Uterus (tissue), 4 donors: ENCODE measurements at regions of chr12 and their contacts with region 1.

Region 1: GRCh38 chr12:89753997-89754396 is 45.4 kb upstream of the ATP2B1 start:
- DNase-seq: no peak
- H3K4me3 ChIP-seq: no peak overlapping the region
- H3K27ac ChIP-seq: no peak overlapping the region
- H3K4me1 ChIP-seq: no peaks in the 10 kb centered on the region
- H3K27me3 ChIP-seq: no peaks in the 10 kb centered on the region
- CTCF ChIP-seq: no peak
- POLR2A ChIP-seq: no peak

Region 2: DNA sequence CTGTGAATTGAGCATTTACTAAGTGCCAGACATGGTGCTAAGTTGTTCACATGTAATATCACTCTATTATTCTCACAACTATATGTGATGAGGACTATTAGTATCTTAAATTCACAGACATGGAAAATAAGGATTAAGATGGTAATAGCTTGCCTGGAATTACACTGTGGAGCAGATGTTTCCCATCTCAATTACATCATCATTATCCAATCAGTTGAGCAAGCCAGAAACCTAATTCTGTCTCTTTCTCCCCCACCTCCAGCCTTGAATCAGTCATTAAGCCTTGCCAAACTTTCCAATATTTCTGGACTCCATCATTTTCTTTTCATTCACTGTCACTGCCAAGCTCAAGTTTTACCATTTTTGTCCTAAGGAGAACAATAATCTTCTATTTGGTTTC is 885.9 kb before region 1 on chr12:
- intact Hi-C with region 1: no loop called
- DNase-seq: no peak
- H3K4me3 ChIP-seq: no peak overlapping the region
- H3K27ac ChIP-seq: no peak overlapping the region
- H3K4me1 ChIP-seq: no peaks in the 10 kb centered on the region
- H3K27me3 ChIP-seq: no peaks in the 10 kb centered on the region
- CTCF ChIP-seq: no peak
- POLR2A ChIP-seq: no peak

Region 3: DNA sequence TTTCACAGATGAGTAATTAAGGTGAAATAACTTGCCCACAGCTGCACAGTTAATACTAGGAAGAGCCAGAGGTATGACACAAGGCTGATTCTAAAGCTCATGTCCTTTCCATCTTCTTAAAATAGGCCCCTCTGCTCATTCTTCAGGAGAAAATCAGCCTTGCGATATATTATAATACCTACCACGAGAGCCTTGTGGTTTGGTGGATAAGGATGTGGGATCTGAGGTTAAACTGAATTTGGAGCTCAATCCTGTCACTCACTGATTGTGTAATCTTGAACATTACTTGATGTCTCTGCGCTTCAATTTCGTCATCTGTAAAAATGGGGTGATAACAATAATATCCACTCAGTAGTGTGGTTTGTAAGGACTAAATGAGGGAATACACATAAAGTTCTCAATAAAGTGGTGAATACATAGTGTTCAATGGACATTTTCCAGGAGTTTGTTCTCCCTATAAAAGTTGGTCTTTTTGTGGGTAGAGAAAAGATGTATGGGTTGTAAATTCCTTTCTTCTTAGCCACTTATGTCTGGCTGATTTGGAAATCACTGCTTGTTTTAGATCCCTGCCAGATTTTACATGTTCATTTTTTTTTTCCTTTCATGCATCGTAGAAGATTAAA is 20.3 kb before region 1 on chr12:
- intact Hi-C with region 1: loop called (anchors 2 kb)
- DNase-seq: no peak
- H3K4me3 ChIP-seq: no peak overlapping the region
- H3K27ac ChIP-seq: no peak overlapping the region
- H3K4me1 ChIP-seq: no peaks in the 10 kb centered on the region
- H3K27me3 ChIP-seq: no peaks in the 10 kb centered on the region
- CTCF ChIP-seq: no peak
- POLR2A ChIP-seq: no peak